ENCODE measurements at regions of chr11 and their contacts with region 1.

Region 1: GRCh38 chr11:118277306-118277705 is 13.2 kb upstream of the MPZL2 start:
- DNase-seq: peak; percentile 49
- ATAC-seq: peak; percentile 74
- H3K4me3 Mint-ChIP-seq: no peak overlapping the region
- H3K27ac Mint-ChIP-seq: peak overlapping the region; percentile 14
- H3K4me1 Mint-ChIP-seq: peaks cover 52% of the 10 kb centered on the region
- H3K27me3 Mint-ChIP-seq: no peaks in the 10 kb centered on the region
- CTCF ChIP-seq: no peak

Region 2: DNA sequence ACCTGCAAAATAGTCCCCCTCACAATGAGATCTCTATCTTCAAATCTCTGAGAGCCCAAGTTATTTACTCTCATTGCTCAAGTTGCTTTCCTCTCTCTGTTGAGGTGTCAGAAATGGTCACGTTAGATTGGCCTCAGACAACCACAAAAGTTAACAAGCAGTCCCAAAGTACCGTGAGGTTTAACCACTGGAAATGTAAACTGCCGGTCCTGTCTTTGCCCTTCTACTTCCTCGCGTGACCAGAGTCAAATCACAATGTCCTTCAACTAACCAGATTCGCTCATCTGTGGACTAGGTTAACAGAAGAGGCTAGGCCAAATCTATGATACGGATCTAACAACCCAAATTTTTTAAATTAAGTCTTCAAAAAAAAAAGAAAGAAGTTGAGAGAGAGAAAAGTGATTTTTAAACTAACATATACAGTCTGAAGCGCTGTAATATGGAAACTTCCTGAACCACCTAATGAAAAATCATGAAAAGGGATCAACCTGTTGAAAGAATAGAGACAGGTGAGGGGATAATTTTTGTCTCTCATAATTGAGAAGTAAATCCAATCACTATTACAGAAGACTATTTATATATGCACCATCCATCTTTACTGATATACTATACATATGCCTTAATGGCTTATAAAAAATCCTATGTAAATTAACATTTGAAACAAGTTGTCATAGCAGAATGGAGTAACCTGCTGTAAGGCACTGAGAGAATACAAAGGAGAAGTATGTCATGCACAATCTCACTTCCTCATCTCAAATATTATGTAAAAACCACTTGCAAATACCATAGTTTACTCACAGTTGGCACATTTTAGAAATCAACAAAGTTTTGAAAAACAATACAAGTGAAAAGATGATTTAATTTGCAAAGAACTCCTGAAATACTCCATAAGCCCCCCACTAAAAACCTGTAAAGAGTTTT is 49.2 kb before region 1 on chr11:
- CTCF ChIA-PET with region 1: interaction called, 3 read pairs
- POLR2A ChIA-PET with region 1: interaction called, 14 read pairs
- intact Hi-C with region 1: no loop called
- DNase-seq: peak; percentile 60
- ATAC-seq: peak; percentile 2
- H3K4me3 Mint-ChIP-seq: peak overlapping the region; percentile 52
- H3K27ac Mint-ChIP-seq: no peak overlapping the region
- H3K4me1 Mint-ChIP-seq: peaks cover 39% of the 10 kb centered on the region
- H3K27me3 Mint-ChIP-seq: no peaks in the 10 kb centered on the region
- CTCF ChIP-seq: no peak

Region 3: DNA sequence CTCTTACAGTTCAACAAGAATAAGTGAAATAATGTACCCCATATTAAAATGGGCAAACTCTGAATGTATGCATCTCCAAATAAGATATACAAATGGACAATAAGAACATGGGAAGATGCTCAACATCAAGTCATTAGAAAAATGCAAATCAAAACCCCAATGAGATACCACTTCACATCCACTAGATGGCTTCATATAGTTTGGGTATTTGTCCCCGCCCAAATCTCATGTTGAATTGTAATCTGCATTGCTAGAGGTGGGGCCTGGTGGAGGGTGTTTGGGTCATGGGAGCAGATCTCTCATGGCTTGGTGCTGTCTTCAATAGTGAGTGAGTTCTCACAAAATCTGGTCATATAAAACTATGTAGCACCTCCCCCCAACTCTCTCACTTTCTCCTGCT is 18.9 kb before region 1 on chr11:
- CTCF ChIA-PET with region 1: interaction called, 19 read pairs
- POLR2A ChIA-PET with region 1: interaction called, 3 read pairs
- intact Hi-C with region 1: no loop called
- DNase-seq: peak; percentile 50
- ATAC-seq: peak; percentile 76
- H3K4me3 Mint-ChIP-seq: no peak overlapping the region
- H3K27ac Mint-ChIP-seq: no peak overlapping the region
- H3K4me1 Mint-ChIP-seq: peaks cover 62% of the 10 kb centered on the region
- H3K27me3 Mint-ChIP-seq: no peaks in the 10 kb centered on the region
- CTCF ChIP-seq: peak; percentile 58

Region 4: GRCh38 chr11:118263695-118264567 is 13.4 kb before region 1 on chr11 and contains the start of gene MPZL2:
- CTCF ChIA-PET with region 1: interaction called, 19 read pairs
- POLR2A ChIA-PET with region 1: interaction called, 5 read pairs
- intact Hi-C with region 1: no loop called
- DNase-seq: peak; percentile 57
- ATAC-seq: peak; percentile 79
- H3K4me3 Mint-ChIP-seq: peak within 1 kb of the TSS; percentile 81
- H3K27ac Mint-ChIP-seq: peak within 1 kb of the TSS; percentile 77
- H3K4me1 Mint-ChIP-seq: peaks cover 56% of the 10 kb centered on the region
- H3K27me3 Mint-ChIP-seq: no peaks in the 10 kb centered on the region
- CTCF ChIP-seq: no peak
- total RNA-seq, gene MPZL2: 26.2 to 31.0 TPM

Region 5: DNA sequence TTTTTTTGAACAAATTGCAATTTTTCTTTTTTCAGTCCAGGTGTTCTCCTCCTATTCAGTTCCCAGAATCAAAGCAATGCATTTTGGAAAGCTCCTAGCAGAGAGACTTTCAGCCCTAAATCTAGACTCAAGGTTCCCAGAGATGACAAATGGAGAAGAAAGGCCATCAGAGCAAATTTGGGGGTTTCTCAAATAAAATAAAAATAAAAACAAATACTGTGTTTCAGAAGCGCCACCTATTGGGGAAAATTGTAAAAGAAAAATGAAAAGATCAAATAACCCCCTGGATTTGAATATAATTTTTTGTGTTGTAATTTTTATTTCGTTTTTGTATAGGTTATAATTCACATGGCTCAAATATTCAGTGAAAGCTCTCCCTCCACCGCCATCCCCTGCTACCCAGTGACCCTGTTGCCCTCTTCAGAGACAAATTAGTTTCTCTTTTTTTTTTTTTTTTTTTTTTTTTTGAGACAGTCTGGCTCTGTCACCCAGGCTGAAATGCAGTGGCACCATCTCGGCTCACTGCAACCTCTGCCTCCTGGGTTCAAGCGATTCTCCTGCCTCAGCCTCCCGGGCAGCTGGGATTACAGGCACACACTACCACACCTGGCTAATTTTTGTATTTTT is 75.9 kb after region 1 on chr11:
- CTCF ChIA-PET with region 1: interaction called, 13 read pairs
- POLR2A ChIA-PET with region 1: no interaction called
- intact Hi-C with region 1: no loop called
- DNase-seq: no peak
- ATAC-seq: peak; percentile 21
- H3K4me3 Mint-ChIP-seq: no peak overlapping the region
- H3K27ac Mint-ChIP-seq: peak overlapping the region; percentile 86
- H3K4me1 Mint-ChIP-seq: peaks cover 33% of the 10 kb centered on the region
- H3K27me3 Mint-ChIP-seq: no peaks in the 10 kb centered on the region
- CTCF ChIP-seq: peak; percentile 83

Measured in activated CD8-positive, alpha-beta T cell treated with anti-CD3 and anti-CD28 coated beads for 36 hours (primary cell).